K562 (cell line): ENCODE measurements at regions of chr11 and their contacts with region 1.

Region 1: DNA sequence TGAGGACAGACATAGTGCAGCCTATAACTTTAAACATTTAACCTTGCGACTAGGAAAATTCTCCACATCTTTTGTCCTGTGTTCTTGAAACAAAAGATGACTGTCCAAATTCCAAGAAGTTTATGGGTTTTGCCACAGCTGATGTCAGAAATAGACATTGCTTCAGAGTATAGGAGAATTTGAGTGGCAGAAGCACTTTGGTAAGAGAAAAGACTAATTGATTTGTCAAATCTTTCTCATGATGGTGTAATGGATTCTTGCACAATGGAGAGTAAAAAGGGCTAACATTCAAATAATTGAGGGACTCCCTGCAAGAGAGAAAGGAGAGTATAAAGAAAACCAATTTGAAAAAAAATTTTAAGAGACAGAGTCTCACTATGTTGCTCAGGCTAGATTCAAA is 25.3 kb downstream of the C11orf58 start:
- DNase-seq: no peak
- ATAC-seq: no peak
- H3K4me3 ChIP-seq: no peak overlapping the region
- H3K27ac ChIP-seq: no peak overlapping the region
- H3K4me1 ChIP-seq: no peaks in the 10 kb centered on the region
- H3K27me3 ChIP-seq: peaks cover 12 to 24% of the 10 kb centered on the region in 2 experiments; a peak in 3 of 5 replicates
- CTCF ChIP-seq: no peak
- EP300 ChIP-seq: no peak
- POLR2A ChIP-seq: no peak
- RAD21 ChIP-seq: no peak

Region 2: GRCh38 chr11:16773981-16774935 is 10.5 kb after region 1 on chr11:
- CTCF ChIA-PET with region 1: no interaction called
- POLR2A ChIA-PET with region 1: interaction called, 15 read pairs
- in situ Hi-C with region 1: no loop called
- intact Hi-C with region 1: no loop called
- DNase-seq: peak in 1 of 4 experiments; percentile 3
- ATAC-seq: no peak
- H3K4me3 ChIP-seq: no peak overlapping the region
- H3K27ac ChIP-seq: no peak overlapping the region
- H3K4me1 ChIP-seq: peaks cover 5 to 6% of the 10 kb centered on the region in 2 experiments; a peak in 3 of 5 replicates
- H3K27me3 ChIP-seq: peaks cover 30 to 59% of the 10 kb centered on the region in 2 experiments
- CTCF ChIP-seq: no peak
- EP300 ChIP-seq: no peak
- POLR2A ChIP-seq: no peak
- RAD21 ChIP-seq: no peak